Vagina (tissue), 2 donors: ENCODE measurements at regions of chr11 and their contacts with region 1.

Region 1: DNA sequence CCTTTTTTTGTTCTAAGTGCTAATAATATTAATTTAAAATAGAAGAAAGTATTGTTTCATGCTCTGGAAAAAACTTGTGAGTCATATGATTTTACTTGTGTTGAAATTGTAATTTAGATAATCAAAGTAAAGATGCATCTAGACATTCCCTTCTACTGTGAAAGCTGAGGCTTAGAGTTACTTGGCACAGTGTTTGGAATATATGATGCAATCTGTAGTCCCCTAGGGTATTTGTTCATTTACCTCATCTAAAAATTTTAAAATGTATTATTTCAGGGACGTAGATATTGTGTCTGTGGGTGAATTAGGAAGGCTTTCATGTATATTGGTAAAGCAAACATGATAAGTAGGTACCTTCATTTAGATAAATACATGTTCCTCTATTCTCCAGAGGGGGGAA is 793.5 kb upstream of the CNTN5 start:
- DNase-seq: no peak
- H3K4me3 ChIP-seq: no peak overlapping the region
- H3K27ac ChIP-seq: no peak overlapping the region
- H3K4me1 ChIP-seq: no peaks in the 10 kb centered on the region
- H3K27me3 ChIP-seq: no peaks in the 10 kb centered on the region
- CTCF ChIP-seq: no peak
- POLR2A ChIP-seq: no peak

Region 2: DNA sequence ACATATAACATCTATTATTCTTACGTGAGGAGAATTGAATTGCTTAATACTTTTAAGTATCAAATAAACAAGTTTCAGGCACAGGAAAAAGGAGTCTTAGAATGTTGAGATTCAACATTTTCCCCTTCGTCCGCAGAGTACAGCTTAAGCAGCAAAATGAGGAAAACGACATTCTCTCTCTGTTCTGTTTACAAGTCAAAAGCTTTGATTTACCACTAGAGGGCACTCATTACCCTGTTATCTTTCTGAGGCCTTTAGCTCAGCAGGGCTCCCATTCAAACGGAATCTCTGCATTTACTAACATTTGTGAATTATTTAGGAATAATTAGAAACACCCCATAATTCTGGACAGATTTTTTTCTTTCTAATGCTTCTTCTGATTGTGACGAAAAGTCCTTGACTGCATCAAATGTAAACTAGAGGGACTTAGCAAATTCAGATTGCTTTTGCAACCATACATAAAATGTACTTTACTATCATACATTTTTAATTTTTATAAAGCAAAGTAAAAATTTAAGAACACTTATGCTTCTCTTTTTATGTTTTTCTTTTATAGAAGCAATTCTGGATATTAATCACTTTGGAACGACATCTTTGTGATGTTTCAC is 1762.5 kb before region 1 on chr11:
- intact Hi-C with region 1: loop called (anchors 5 kb)
- DNase-seq: no peak
- H3K4me3 ChIP-seq: no peak overlapping the region
- H3K27ac ChIP-seq: no peak overlapping the region
- H3K4me1 ChIP-seq: peaks cover 6% of the 10 kb centered on the region
- H3K27me3 ChIP-seq: no peaks in the 10 kb centered on the region
- CTCF ChIP-seq: peak; percentile 48 to 76 (median 53)
- POLR2A ChIP-seq: no peak